ENCODE measurements at regions of chr14 and their contacts with region 1.

Region 1: DNA sequence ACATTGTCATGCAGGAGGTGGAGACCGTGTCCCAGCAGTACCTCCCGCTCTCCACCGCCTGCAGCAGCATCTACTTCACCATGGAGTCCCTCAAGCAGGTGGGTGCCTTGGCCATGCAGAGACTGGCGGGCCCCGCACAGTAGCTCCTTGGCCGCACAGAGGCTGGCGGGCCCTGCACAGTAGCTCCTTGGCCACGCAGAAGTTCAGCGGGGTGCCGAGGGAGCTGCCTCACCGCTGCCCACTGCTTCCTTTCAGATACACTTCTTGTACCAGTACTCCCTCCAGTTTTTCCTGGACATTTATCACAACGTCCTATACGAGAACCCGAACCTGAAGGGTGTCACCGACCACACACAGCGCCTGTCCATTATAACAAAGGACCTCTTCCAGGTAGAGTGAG is 47.7 kb downstream of the HSP90AA1 start:
- DNase-seq: no peak
- ATAC-seq: no peak
- H3K4me3 ChIP-seq: no peak overlapping the region
- H3K27ac ChIP-seq: no peak overlapping the region
- H3K4me1 ChIP-seq: peaks cover 4% of the 10 kb centered on the region
- H3K27me3 ChIP-seq: no peaks in the 10 kb centered on the region
- CTCF ChIP-seq: no peak

Region 2: DNA sequence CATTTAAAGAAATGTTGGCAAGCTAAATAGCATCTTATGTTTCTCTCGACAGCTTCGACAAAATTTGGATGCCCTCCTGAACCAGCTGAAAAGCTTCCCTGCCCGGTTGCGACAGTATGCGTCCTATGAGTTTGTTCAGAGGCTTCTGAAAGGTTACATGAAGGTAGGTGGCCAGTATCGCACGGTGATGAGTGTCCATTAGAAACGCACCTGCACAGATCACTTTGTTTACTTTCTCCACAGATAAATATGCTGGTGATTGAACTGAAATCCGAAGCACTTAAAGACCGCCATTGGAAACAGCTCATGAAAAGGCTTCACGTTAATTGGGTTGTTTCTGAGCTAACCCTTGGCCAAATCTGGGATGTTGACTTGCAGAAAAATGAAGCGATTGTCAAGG is 38.3 kb before region 1 on chr14:
- intact Hi-C with region 1: loop called in 1 of 2 experiments (anchors 5 kb)
- DNase-seq: no peak
- ATAC-seq: no peak
- H3K4me3 ChIP-seq: no peak overlapping the region
- H3K27ac ChIP-seq: no peak overlapping the region
- H3K4me1 ChIP-seq: no peaks in the 10 kb centered on the region
- H3K27me3 ChIP-seq: no peaks in the 10 kb centered on the region
- CTCF ChIP-seq: no peak